ENCODE measurements at regions of chr1 and their contacts with region 1.

Region 1: DNA sequence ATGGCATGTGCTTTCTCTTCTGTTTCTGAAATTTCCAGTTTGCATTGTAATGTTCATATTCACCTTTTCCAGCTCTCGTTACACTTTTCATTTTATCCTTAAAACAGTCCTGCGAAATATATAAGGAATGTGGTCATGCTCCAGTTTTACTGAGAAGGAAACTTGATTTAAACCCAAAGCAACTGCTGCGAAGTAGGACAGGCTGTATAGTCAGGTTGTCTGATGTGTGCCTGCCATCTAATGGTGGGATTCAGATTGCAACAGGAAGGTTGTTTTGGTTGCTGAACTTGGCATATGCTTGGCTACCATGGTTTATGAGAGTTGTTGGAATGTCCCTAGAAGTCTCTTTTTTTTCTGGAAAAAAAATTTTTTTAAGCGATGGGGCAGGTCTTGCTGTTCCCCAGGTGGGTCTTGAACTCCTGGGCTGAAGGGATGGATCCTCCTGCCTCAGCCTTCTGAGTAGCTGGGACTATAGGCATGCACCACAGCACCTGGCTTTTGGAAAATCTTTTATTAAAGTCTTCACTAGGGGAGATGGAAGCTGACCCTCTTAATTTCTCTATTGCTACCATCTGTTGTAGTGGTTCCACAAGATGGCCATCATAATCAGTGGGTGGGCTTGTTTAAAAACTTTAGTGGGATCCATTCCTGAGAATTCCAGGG is 86.9 kb downstream of the UCK2 start:
- DNase-seq: no peak
- ATAC-seq: peak; percentile 79 to 96 (median 86)
- H3K4me3 ChIP-seq: no peak overlapping the region
- H3K27ac ChIP-seq: no peak overlapping the region
- H3K4me1 ChIP-seq: peaks cover 13% of the 10 kb centered on the region
- H3K27me3 ChIP-seq: no peaks in the 10 kb centered on the region
- CTCF ChIP-seq: peak; percentile 92

Region 2: GRCh38 chr1:165383067-165383466 is 531.2 kb before region 1 on chr1:
- intact Hi-C with region 1: loop called in 1 of 2 experiments (anchors 5 kb)
- DNase-seq: peak; percentile 79 to 92
- ATAC-seq: peak; percentile 98 to 99 (median 99)
- H3K4me3 ChIP-seq: no peak overlapping the region
- H3K27ac ChIP-seq: peak overlapping the region; percentile 80
- H3K4me1 ChIP-seq: peaks cover 9% of the 10 kb centered on the region
- H3K27me3 ChIP-seq: no peaks in the 10 kb centered on the region
- CTCF ChIP-seq: no peak

Region 3: GRCh38 chr1:165392634-165393571 is 521.4 kb before region 1 on chr1:
- intact Hi-C with region 1: loop called in 1 of 2 experiments (anchors 10 kb)
- DNase-seq: peak; percentile 89 to 93
- ATAC-seq: peak; percentile 93 to 96 (median 94)
- H3K4me3 ChIP-seq: peak overlapping the region; percentile 23
- H3K27ac ChIP-seq: no peak overlapping the region
- H3K4me1 ChIP-seq: no peaks in the 10 kb centered on the region
- H3K27me3 ChIP-seq: no peaks in the 10 kb centered on the region
- CTCF ChIP-seq: peak; percentile 92

Region 4: DNA sequence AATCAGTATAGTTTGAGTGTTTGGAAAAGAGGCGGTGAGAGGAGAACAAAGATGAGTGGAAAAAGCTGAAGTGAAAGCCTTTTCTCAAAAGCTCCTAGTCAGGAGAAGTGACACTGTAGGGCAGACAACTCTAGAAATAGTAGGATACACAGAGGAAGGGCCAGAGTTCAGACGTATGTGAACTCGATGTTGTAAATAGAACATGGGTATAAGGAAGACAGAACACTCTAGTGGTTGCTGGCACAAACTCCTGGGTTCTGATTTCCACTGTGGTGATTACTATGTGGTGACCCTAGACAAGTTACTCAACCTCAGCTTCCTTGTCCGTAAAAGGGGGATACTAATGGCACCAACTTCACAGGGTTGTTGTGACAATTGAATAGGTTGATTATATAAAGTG is 313.5 kb before region 1 on chr1:
- intact Hi-C with region 1: loop called (anchors 2 to 5 kb)
- DNase-seq: no peak
- ATAC-seq: peak in 2 of 4 donors; percentile 38 to 43
- H3K4me3 ChIP-seq: no peak overlapping the region
- H3K27ac ChIP-seq: peak overlapping the region; percentile 47
- H3K4me1 ChIP-seq: no peaks in the 10 kb centered on the region
- H3K27me3 ChIP-seq: no peaks in the 10 kb centered on the region
- CTCF ChIP-seq: no peak

Region 5: DNA sequence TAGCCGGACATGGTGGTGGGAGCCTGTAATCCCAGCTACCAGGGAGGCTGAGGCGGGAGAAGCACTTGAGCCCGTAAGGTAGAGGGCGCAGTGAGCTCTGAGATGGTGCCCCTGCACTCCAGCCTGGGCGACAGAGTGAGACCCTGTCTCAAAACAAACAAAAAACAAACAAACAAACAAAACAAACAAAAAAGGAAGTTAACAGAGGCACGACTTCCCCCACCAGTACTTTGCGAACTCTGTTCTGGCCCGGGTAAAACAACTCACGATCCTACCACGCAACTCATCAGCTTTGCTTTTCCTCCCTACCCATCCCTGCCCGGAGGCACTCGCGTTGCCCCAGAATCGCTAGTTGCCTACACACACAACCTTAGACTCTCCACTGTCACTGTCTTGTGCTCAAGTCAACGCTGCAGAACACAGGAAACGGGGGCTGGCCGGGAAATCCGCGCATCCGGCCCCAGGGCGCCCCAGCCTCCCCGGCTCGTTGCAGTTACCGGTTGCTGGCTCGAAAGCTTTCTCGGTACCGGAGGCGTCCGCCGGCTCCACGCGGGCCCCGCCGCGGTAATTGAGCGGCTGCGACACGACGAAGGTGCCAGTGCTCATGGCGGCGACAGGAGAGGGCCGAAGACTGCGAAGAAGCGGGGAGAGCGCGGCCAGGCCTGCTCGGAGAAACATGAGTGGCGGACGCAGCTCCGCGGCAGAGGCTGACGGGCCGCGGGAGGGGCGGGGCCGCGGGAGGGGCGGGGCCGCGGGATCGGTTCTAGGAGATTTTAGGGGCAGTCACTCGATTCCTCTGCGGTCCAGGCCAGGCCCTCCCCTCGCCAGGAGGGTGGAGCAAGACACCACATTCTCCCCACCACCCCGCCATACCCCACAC is 216.1 kb before region 1 on chr1 and contains the start of gene ALDH9A1:
- intact Hi-C with region 1: loop called in 1 of 2 experiments (anchors 5 kb)
- DNase-seq: peak; percentile 93 to 94
- ATAC-seq: peak; percentile 90 to 94 (median 93)
- H3K4me3 ChIP-seq: peak within 1 kb of the TSS; percentile 77
- H3K27ac ChIP-seq: peak within 1 kb of the TSS; percentile 91
- H3K4me1 ChIP-seq: peaks cover 16% of the 10 kb centered on the region
- H3K27me3 ChIP-seq: no peaks in the 10 kb centered on the region
- CTCF ChIP-seq: peak; percentile 33
- total RNA-seq, gene ALDH9A1: 40.9 to 69.3 (median 49.9) TPM

Region 6: DNA sequence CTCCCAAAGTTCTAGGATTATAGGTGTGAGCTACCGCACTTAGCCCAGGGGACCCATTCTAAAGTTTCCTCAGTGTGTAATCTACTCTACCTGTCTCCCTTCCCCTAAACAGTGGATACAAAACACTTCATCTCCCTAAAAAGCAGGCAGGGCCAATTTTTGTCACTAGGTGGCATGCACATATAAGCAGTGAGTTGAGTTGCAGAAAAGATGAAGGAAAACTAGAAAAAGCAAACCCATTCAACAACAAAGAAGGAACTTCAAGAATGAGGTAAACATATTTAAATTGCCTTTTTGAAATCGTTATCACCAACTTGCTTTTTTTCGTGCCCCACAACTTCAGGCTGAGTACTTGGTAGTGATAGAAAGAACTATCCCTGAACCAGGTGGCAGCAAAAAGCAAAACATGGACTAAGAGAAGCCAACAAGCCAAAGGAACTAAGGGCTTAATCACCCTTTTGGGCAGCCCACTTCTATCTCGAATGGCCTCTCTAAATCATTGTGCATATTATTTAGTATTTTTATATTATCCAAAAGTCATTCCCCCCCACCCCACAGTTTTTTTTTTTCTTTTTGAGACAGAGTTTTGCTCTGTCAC is 196.2 kb before region 1 on chr1:
- intact Hi-C with region 1: loop called (anchors 1 to 5 kb)
- DNase-seq: no peak
- ATAC-seq: peak in 2 of 4 donors; percentile 44 to 80
- H3K4me3 ChIP-seq: no peak overlapping the region
- H3K27ac ChIP-seq: no peak overlapping the region
- H3K4me1 ChIP-seq: no peaks in the 10 kb centered on the region
- H3K27me3 ChIP-seq: no peaks in the 10 kb centered on the region
- CTCF ChIP-seq: peak; percentile 63

Region 7: DNA sequence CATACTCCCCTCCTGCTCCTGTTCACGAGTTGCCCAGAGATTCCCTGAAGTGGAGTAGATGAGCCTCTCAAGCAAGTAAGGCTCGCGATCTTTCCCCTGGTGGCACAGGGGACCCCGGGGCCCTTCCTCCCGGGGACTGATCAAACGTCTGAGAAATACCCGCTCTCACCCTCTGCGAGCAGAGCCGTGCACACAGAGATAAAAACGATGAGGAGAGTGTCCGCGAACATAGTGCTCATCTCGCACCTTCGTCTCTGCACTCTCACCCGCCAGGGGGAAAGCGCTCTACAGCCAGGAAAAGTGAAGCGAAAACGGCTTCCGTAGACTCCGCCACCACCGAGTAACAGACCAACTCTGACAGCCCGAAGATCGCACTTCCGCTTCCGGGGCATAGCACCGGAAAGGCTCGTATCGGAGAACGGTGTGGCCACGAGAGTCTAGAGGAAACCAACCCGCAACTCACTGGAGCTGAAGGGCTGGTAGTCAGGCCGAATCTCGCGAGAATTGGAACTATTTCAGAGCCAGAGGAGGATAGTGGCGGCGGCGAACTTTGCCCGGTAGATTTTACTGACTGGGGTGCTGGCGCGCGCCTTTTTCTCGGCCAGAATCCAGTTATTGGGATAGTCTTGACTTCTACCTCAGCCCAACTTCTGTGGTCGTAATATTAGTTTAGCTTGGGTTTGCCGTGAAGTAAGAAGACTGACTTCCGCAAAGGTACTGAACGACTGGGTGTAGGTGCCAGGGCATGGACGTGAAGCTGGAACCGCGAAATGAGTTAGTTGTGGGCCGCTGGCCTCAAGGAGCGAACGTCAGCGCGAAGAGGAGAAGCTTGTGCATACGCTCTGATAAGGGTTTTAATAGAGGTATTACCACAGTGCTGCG is 145.5 kb before region 1 on chr1 and contains the start of gene TMCO1:
- intact Hi-C with region 1: loop called (anchors 5 to 10 kb)
- DNase-seq: peak; percentile 94 to 97
- ATAC-seq: peak; percentile 99 to 100 (median 100)
- H3K4me3 ChIP-seq: peak within 1 kb of the TSS; percentile 99
- H3K27ac ChIP-seq: peak within 1 kb of the TSS; percentile 95
- H3K4me1 ChIP-seq: peaks cover 39% of the 10 kb centered on the region
- H3K27me3 ChIP-seq: no peaks in the 10 kb centered on the region
- CTCF ChIP-seq: peak; percentile 11
- total RNA-seq, gene TMCO1: 31.5 to 41.9 (median 33.4) TPM